GM12878 (cell line): ENCODE measurements at regions of chr19 and their contacts with region 1.

Region 1: DNA sequence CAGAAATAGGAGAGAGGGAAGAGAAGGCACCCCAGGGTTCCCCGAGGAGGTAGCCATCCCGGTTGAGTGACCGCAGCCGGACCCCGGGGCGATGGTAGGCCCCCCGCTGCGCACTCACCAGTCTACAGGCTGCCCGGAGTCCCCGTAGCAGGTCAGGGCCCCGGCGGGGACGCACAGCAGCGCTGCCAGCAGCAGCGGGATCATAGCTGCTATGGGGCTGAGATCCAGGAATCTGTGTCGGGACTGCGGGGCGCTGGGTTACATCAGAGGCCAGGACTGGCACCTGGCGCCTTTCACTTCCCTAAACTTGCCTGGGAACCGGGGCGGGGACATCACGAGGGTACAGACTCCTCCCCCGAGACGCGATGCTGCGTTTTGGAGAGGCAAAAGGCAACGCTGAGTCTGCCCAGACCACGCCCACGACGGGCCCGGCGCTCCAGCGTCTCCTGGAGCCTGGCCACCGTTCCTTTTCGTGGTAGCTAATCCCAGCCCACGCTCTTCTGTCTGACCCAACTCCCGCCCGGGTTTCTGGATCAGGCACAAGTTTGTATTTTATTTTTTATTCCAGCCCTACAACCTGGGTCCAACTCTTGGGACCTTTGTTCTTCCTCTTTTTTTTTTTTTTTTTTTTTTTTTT is at the start of gene DNASE2:
- DNase-seq: peak; percentile 85
- ATAC-seq: peak; percentile 88
- H3K4me3 ChIP-seq: peak within 1 kb of the TSS; percentile 90
- H3K27ac ChIP-seq: peak within 1 kb of the TSS; percentile 82
- H3K4me1 ChIP-seq: peaks cover 16% of the 10 kb centered on the region
- H3K27me3 ChIP-seq: no peaks in the 10 kb centered on the region; a peak in 1 of 4 replicates
- CTCF ChIP-seq: no peak
- EP300 ChIP-seq: peak in 1 of 2 experiments; percentile 59; a peak in 1 of 4 replicates
- POLR2A ChIP-seq: peak; percentile 88
- RAD21 ChIP-seq: no peak
- polyA plus RNA-seq, gene DNASE2: 4.9 to 7.8 TPM

Region 2: GRCh38 chr19:12867120-12868099 is 13.9 kb before region 1 on chr19:
- CTCF ChIA-PET with region 1: interaction called, 4 read pairs
- POLR2A ChIA-PET with region 1: interaction called, 12 read pairs
- RAD21 ChIA-PET with region 1: no interaction called
- SMC1A ChIA-PET with region 1: no interaction called
- in situ Hi-C with region 1: no loop called
- intact Hi-C with region 1: no loop called
- DNase-seq: peak; percentile 31
- ATAC-seq: peak; percentile 87
- H3K4me3 ChIP-seq: peak overlapping the region; percentile 75
- H3K27ac ChIP-seq: no peak overlapping the region
- H3K4me1 ChIP-seq: peaks cover 5% of the 10 kb centered on the region; the same call in 1 of the 2 replicates
- H3K27me3 ChIP-seq: no peaks in the 10 kb centered on the region
- CTCF ChIP-seq: 0 out of 6 replicates have a peak, but pooled peaks of 1 of the 3 experiments have one; percentile 1
- EP300 ChIP-seq: 0 out of 4 replicates have a peak, but pooled peaks of 1 of the 2 experiments have one; percentile 37
- POLR2A ChIP-seq: peak; percentile 45; the same call in 1 of the 2 replicates
- RAD21 ChIP-seq: no peak

Region 3: DNA sequence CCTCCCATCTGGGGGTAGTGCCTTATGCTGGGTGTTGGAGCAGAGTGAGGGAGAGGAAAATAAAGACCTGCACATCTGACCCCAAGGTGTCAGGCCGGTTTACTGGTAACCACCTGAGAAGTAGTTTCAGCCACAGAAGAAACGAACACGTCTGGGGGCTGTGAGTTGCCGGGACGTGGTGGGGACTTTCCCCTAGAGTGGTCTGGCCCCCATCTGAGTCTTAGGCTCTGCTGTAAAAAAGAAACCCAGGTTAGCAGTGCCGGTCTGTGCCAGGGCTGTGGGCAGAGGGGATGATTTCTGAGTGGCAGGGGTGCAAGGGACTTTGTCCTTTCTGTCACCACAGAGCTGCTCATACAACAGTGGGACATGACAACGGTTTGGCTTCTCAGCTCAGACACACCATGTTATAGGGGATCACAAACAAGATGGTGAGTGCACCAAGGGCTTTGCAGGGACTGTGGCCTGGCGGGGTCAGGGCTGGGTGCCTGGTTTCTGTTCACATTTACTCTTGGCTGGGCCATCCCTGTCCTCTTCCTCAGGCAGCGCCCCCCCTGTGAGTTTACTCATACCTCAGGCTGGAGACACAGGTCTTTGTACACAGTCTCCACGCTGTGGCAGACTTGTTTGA is 18.7 kb after region 1 on chr19:
- CTCF ChIA-PET with region 1: interaction called, 9 read pairs
- POLR2A ChIA-PET with region 1: interaction called, 4 read pairs
- RAD21 ChIA-PET with region 1: interaction called, 21 read pairs
- SMC1A ChIA-PET with region 1: no interaction called
- in situ Hi-C with region 1: no loop called
- intact Hi-C with region 1: no loop called
- DNase-seq: peak; percentile 61
- ATAC-seq: peak; percentile 97
- H3K4me3 ChIP-seq: peak overlapping the region; percentile 9; the same call in 1 of the 2 replicates
- H3K27ac ChIP-seq: peak overlapping the region; percentile 4; the same call in 1 of the 2 replicates
- H3K4me1 ChIP-seq: peaks cover 15% of the 10 kb centered on the region
- H3K27me3 ChIP-seq: no peaks in the 10 kb centered on the region
- CTCF ChIP-seq: peak in 2 of 3 experiments; percentile 1 to 18; a peak in 1 of 6 replicates
- EP300 ChIP-seq: peak; percentile 76 to 89; a peak in 3 of 4 replicates
- POLR2A ChIP-seq: no peak
- RAD21 ChIP-seq: no peak